Right ventricle myocardium inferior (tissue), 1 donor: ENCODE measurements at regions of chr2 and their contacts with region 1.

Region 1: DNA sequence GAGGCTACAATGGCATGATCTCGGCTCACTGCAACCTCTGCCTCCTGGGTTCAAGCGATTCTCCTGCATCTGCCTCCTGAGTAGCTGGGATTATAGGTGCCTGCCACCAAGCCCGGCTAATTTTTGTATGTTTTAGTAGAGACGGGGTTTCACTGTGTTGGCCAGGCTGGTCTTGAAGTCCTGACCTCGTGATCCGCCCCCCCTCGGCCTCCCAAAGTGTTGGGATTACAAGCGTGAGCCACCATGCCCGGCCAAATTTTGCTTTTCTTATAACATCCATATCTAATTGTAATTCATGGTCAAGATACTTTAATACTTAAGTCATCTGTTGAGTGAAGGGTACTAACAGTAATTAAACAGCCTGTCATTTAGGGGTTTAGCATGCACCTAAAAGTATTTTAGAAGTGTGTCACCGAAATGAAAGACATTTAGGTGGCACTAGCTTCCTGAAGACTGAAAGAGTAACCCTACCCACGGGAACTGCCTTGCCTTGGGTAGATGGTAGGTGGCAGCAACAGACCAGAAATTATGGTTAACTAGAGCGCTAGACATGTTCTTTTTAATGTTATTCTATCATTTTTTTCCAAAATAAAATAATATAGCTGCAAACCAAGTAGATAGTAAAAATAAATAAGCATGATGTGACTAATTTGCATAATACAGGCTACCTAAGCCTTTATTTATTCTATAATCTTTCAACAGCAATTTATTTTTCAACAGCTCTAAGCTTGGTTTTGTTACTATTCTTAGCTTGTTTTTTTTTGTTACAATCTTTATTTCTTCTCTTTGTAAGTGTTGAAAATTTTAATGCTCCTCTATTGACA is 8.6 kb upstream of the ACYP2 start:
- DNase-seq: no peak
- ATAC-seq: peak; percentile 52

Region 2: DNA sequence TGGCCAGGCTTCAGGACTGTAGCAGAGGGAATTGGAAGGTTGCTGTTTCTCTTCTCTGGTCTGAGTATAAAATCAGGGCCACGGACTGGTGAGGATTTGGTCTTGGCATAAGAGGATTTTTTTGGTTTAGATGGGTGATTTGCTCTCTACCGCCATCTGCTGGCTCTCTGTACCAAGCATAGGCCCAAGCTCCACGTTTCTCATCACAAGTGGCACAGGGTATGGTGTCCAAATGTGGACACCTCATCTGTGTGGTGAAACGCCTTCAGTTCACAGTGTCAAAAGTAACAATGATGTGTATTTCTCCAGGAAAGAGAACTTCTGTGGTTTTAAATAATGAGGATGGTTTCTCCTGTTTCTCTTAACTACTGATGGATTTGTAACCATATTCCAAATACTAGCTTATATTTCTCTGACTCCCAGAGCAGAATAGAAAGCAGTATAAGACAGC is 731.8 kb after region 1 on chr2:
- intact Hi-C with region 1: loop called (anchors 5 kb)
- DNase-seq: peak; percentile 68
- ATAC-seq: peak; percentile 77